ENCODE measurements at regions of chr7 and their contacts with region 1.

Region 1: GRCh38 chr7:150898475-150899011 is 46.2 kb downstream of the AOC1 start:
- DNase-seq: peak; percentile 90
- H3K4me3 ChIP-seq: no peak overlapping the region
- H3K27ac ChIP-seq: peak overlapping the region in 1 of 2 experiments; percentile 34; a peak in 1 of 4 replicates
- H3K4me1 ChIP-seq: peaks cover 2 to 48% of the 10 kb centered on the region in 2 experiments; a peak in 2 of 4 replicates
- H3K27me3 ChIP-seq: no peaks in the 10 kb centered on the region
- CTCF ChIP-seq: peak; percentile 99
- EP300 ChIP-seq: no peak
- RAD21 ChIP-seq: peak; percentile 98

Region 2: GRCh38 chr7:150787321-150788281 is 110.9 kb before region 1 on chr7:
- CTCF ChIA-PET with region 1: interaction called, 72 read pairs
- POLR2A ChIA-PET with region 1: interaction called, 13 read pairs
- DNase-seq: peak; percentile 75
- H3K4me3 ChIP-seq: no peak overlapping the region
- H3K27ac ChIP-seq: peak overlapping the region; percentile 47 to 100; a peak in 3 of 4 replicates
- H3K4me1 ChIP-seq: peaks cover 19 to 61% of the 10 kb centered on the region in 2 experiments; a peak in 3 of 4 replicates
- H3K27me3 ChIP-seq: no peaks in the 10 kb centered on the region
- CTCF ChIP-seq: no peak
- EP300 ChIP-seq: peak; percentile 31 to 96; a peak in 3 of 4 replicates
- RAD21 ChIP-seq: peak; percentile 59

Region 3: GRCh38 chr7:150867605-150868004 is 30.9 kb before region 1 on chr7:
- CTCF ChIA-PET with region 1: interaction called, 21 read pairs
- POLR2A ChIA-PET with region 1: no interaction called
- DNase-seq: no peak
- H3K4me3 ChIP-seq: no peak overlapping the region
- H3K27ac ChIP-seq: no peak overlapping the region
- H3K4me1 ChIP-seq: peaks cover 0 to 4% of the 10 kb centered on the region in 2 experiments; a peak in 1 of 4 replicates
- H3K27me3 ChIP-seq: no peaks in the 10 kb centered on the region
- CTCF ChIP-seq: no peak
- EP300 ChIP-seq: no peak
- RAD21 ChIP-seq: no peak

Region 4: GRCh38 chr7:150916670-150917069 is 18.1 kb after region 1 on chr7:
- CTCF ChIA-PET with region 1: interaction called, 70 read pairs
- POLR2A ChIA-PET with region 1: no interaction called
- DNase-seq: no peak
- H3K4me3 ChIP-seq: no peak overlapping the region
- H3K27ac ChIP-seq: no peak overlapping the region
- H3K4me1 ChIP-seq: no peaks in the 10 kb centered on the region
- H3K27me3 ChIP-seq: peaks cover 53% of the 10 kb centered on the region
- CTCF ChIP-seq: no peak
- EP300 ChIP-seq: no peak
- RAD21 ChIP-seq: no peak

Region 5: GRCh38 chr7:150955519-150956394 is 57.2 kb after region 1 on chr7:
- CTCF ChIA-PET with region 1: interaction called, 280 read pairs
- POLR2A ChIA-PET with region 1: interaction called, 7 read pairs
- DNase-seq: peak; percentile 97
- H3K4me3 ChIP-seq: peak overlapping the region in 1 of 2 experiments; percentile 45; a peak in 2 of 4 replicates
- H3K27ac ChIP-seq: peak overlapping the region in 1 of 2 experiments; percentile 94; a peak in 3 of 4 replicates
- H3K4me1 ChIP-seq: peaks cover 0 to 85% of the 10 kb centered on the region in 2 experiments; a peak in 2 of 4 replicates
- H3K27me3 ChIP-seq: peaks cover 15% of the 10 kb centered on the region; the same call in 1 of the 2 replicates
- CTCF ChIP-seq: no peak
- EP300 ChIP-seq: peak in 1 of 2 experiments; percentile 12; a peak in 1 of 4 replicates
- RAD21 ChIP-seq: peak; percentile 3; the same call in 1 of the 2 replicates

Region 6: DNA sequence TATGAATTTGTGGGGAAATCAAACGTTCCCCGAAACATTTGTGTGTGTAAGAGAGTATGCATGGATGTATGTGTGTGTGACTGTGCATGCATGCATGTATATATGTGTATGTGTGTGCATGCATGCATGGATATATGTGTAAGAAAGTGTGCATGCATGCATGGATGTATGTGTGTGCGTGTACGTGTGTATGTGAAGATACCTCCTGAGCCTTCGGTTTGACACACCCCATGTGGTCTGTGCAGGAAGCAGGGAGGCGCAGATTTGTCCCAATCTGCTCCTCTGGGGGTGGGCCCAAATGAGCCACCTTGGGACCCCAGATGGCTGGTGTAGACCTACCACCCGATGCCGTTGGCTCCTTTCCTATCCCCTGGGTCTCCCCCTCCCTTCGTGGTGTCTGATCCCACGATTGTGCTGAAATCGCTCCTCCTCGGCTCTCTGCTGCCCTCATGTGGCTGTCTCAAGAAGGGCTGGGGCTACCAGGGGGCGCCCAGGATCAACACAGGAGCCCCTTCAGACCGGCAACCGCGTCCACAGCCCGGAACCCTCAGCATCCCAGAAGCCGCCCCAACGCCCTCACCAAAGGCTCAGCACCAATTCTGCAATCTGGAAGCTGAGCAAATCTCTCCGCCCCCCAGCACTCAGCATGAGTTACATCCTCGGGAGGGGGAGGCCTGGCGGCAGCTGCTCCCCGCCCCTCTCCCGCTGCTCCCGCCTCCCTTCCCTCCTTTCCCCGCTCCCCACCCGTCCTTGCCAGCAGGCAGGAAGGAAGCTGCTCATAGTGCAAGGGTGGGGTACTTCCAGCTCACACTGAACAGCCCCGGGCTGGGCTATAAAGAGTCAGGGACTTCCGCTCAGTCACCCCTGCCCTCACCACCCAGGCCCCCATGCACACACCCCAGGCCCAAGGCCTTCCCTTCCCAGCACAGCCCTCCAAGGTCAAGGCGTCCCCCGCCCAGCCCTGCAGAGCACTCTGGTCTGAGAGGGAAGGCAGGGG is 90.0 kb after region 1 on chr7:
- CTCF ChIA-PET with region 1: interaction called, 265 read pairs
- POLR2A ChIA-PET with region 1: interaction called, 3 read pairs
- DNase-seq: peak; percentile 95
- H3K4me3 ChIP-seq: peak overlapping the region; percentile 13 to 46; a peak in 2 of 4 replicates
- H3K27ac ChIP-seq: peak overlapping the region in 1 of 2 experiments; percentile 86; a peak in 2 of 4 replicates
- H3K4me1 ChIP-seq: peaks cover 0 to 32% of the 10 kb centered on the region in 2 experiments; a peak in 2 of 4 replicates
- H3K27me3 ChIP-seq: peaks cover 13% of the 10 kb centered on the region; the same call in 1 of the 2 replicates
- CTCF ChIP-seq: peak; percentile 97
- EP300 ChIP-seq: no peak
- RAD21 ChIP-seq: peak; percentile 92

Measured in SK-N-SH (cell line).